Heart right ventricle (tissue), 16 donors: ENCODE measurements at regions of chrX and their contacts with region 1.

Region 1: DNA sequence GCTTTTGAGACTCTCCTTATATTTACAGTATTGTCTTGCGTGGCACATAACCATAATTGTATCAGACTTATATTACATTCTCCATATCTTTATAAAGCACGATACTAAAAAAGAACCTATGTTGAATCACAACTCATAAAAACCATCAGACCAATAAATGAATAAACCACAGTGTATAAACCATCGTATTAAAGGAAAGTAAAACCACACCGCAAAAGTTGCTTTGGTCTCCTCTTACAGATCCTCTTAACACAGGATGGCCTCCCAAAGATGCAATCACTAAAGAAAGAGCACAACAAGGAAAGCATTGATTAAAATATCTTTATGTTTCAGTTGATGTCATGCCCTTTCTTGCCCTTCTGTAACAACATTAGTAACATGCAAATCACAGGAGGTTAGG is 437.9 kb downstream of the AFF2 start:
- DNase-seq: no peak
- ATAC-seq: no peak
- H3K4me3 ChIP-seq: no peak overlapping the region
- H3K27ac ChIP-seq: no peak overlapping the region
- H3K4me1 ChIP-seq: no peaks in the 10 kb centered on the region
- H3K27me3 ChIP-seq: peaks cover 0 to 3% (median 0%) of the 10 kb centered on the region in 7 donors
- CTCF ChIP-seq: no peak

Region 2: GRCh38 chrX:150558424-150558823 is 1620.1 kb after region 1 on chrX:
- intact Hi-C with region 1: loop called in 1 of 10 experiments (anchors 5 kb)
- DNase-seq: no peak
- ATAC-seq: peak in 2 of 8 donors; percentile 37 to 42
- H3K4me3 ChIP-seq: no peak overlapping the region
- H3K27ac ChIP-seq: peak overlapping the region in 1 of 10 donors; percentile 16
- H3K4me1 ChIP-seq: no peaks in the 10 kb centered on the region
- H3K27me3 ChIP-seq: no peaks in the 10 kb centered on the region
- CTCF ChIP-seq: no peak